Cardiac septum (tissue), 1 donor: ENCODE measurements at regions of chr2 and their contacts with region 1.

Region 1: DNA sequence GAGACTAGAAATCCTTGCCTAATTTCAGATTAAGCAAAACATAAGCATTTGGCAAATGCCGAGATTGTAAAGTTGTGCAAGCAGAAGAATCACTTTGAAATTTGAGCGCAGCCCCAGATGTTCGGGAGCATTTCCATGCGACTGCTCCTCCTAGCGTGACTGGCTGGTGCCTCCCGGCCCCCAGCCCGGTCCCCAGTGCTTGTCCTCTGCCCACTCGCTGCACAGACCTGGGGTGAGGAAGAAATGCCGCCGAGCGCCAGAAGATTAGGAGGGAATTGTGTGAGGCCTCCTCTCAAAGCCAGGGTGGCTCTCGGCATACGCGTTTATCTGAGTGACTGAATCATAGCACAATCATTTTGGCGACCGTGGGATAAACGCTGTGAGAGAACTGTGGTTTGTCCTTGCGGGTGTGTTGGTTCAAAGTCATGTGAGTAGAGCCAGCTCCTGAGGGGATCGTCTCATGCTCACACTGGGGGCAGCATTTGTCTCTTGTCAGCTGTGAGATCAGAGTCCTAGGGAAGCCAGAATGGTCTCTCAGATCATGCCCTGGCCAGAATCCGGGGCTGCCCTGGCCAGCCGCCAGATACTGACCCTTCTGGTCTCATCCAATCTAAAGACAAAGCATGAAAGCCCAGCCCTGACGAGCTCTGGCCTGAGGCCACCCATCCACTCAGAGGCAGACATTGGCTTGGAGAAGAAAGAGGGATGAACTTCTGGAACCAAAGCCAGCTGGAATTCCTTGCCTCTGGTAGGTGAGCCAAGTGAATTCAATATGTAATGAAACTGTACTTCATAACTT is 189.3 kb downstream of the SH3RF3 start:
- DNase-seq: no peak

Region 2: GRCh38 chr2:109195193-109196045 is 122.9 kb before region 1 on chr2:
- intact Hi-C with region 1: loop called (anchors 2 kb)
- DNase-seq: no peak

Region 3: DNA sequence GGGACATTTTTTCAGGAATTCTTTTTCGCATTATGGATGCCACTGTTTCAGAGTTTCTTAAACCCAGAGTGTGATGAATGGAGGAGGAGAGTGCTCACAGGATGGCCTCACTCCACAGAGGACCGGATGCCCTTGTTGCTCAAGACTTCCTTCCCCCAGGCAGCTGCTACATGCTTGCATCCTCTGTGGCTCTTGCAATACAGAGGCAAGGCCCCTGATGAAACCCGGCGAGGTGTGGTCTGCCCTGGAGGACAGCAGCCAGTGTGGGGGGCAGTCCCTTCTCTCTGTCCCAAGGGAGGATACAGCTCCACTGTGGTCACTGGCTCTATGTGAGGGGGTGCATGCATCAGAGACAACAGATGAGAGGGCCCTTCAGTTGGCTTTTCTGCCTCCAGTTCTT is 79.8 kb before region 1 on chr2:
- intact Hi-C with region 1: no loop called
- DNase-seq: peak; percentile 94

Region 4: GRCh38 chr2:109290887-109291643 is 27.3 kb before region 1 on chr2:
- intact Hi-C with region 1: loop called (anchors 2 kb)
- DNase-seq: no peak

Region 5: GRCh38 chr2:109382951-109383350 is 64.6 kb after region 1 on chr2:
- intact Hi-C with region 1: loop called (anchors 2 kb)
- DNase-seq: peak; percentile 80